K562 (cell line): ENCODE measurements at regions of chr7 and their contacts with region 1.

Region 1: DNA sequence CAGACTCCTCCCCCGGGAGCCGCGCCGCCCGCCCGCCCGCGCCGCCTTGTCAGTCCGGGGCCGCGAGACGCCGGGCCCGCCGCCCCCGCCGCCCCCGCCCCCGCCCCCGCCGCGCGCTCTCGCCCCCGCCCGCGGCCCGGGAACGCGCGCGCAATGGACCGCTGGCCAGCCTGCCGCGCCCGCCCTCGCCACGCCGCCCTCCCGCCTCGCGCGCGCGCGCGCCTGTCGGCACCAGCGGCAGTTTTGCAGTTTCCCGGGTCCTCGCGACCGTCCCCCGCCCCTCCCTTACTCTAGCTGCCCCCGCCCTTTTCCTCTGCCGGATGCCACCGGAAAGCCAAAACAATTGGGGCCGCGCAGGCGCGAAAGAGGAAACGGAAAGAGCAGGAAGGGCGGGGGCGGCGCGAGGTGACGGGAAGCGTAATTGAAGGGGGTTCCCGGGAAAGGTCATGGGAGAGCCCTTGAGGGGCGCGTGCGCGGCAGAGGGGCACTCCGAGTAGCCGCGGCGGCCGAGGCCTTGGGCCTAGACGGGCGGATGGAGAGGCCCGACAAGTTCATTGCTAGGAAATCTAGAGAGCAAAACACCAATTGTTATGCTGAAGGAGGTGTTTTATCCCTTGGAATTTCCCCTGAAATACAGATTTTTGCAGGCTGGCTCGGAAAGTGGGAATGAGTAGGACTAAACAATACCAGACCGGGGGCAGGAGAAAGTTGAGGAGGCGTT is 400 bp upstream of the KBTBD2 start:
- DNase-seq: peak; percentile 88 to 98 (median 90)
- ATAC-seq: peak; percentile 50
- H3K4me3 ChIP-seq: peak overlapping the region; percentile 84
- H3K27ac ChIP-seq: peak overlapping the region; percentile 99
- H3K4me1 ChIP-seq: peaks cover 21 to 35% of the 10 kb centered on the region in 2 experiments
- H3K27me3 ChIP-seq: no peaks in the 10 kb centered on the region
- CTCF ChIP-seq: no peak
- EP300 ChIP-seq: peak; percentile 4; the same call in 1 of the 2 replicates
- POLR2A ChIP-seq: peak; percentile 83
- RAD21 ChIP-seq: no peak

Region 2: DNA sequence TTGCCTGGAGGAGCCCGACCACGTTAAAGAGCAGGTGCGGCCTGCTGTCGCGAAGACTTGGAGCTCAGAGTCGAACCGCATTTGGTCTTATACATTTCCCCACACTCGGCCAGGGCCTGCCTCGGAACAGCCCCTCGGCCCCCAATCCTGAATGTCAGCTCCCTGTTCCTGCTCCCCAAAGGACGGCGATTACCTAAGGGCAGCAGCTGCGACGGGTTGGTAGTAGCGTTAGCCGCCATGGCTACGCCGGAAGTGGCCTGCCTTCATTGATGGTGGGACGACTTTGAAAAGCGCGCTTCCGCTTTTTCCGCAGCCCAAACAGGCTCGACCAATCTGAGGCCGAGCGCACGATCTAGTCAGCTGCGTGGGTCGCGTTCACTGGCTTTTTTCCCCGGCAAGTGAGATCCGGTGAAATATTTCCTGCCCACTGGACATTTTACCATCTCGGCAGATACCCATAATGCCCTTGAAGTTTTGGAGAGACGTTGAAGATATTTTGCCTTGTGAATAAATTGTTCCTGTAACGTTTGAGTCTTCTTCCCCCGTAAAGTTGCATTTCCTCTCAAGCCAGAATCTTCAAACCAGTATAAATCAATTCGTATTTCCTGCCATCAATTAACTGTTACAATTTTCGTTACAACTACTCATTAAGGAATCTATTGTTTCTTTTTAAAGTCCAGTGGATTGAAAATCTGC is 401.7 kb before region 1 on chr7 and contains the start of gene LSM5:
- CTCF ChIA-PET with region 1: no interaction called
- POLR2A ChIA-PET with region 1: no interaction called
- in situ Hi-C with region 1: no loop called
- intact Hi-C with region 1: loop called (anchors 5 kb)
- DNase-seq: peak; percentile 71 to 97 (median 77)
- ATAC-seq: peak; percentile 87
- H3K4me3 ChIP-seq: peak within 1 kb of the TSS; percentile 62
- H3K27ac ChIP-seq: peak within 1 kb of the TSS; percentile 81
- H3K4me1 ChIP-seq: peaks cover 0 to 3% of the 10 kb centered on the region in 2 experiments; a peak in 2 of 5 replicates
- H3K27me3 ChIP-seq: no peaks in the 10 kb centered on the region
- CTCF ChIP-seq: no peak
- EP300 ChIP-seq: peak; percentile 46; the same call in 1 of the 2 replicates
- POLR2A ChIP-seq: peak; percentile 91
- RAD21 ChIP-seq: no peak; a peak in 1 of 4 replicates
- polyA plus RNA-seq, gene LSM5: 513 to 620 TPM

Region 3: GRCh38 chr7:32879460-32879859 is 12.5 kb before region 1 on chr7:
- CTCF ChIA-PET with region 1: no interaction called
- POLR2A ChIA-PET with region 1: interaction called, 32 read pairs
- in situ Hi-C with region 1: no loop called
- intact Hi-C with region 1: no loop called
- DNase-seq: peak; percentile 23 to 68 (median 43)
- ATAC-seq: peak; percentile 80
- H3K4me3 ChIP-seq: no peak overlapping the region
- H3K27ac ChIP-seq: peak overlapping the region; percentile 63
- H3K4me1 ChIP-seq: peaks cover 16 to 34% of the 10 kb centered on the region in 2 experiments
- H3K27me3 ChIP-seq: no peaks in the 10 kb centered on the region
- CTCF ChIP-seq: no peak
- EP300 ChIP-seq: peak; percentile 64
- POLR2A ChIP-seq: no peak
- RAD21 ChIP-seq: no peak

Region 4: DNA sequence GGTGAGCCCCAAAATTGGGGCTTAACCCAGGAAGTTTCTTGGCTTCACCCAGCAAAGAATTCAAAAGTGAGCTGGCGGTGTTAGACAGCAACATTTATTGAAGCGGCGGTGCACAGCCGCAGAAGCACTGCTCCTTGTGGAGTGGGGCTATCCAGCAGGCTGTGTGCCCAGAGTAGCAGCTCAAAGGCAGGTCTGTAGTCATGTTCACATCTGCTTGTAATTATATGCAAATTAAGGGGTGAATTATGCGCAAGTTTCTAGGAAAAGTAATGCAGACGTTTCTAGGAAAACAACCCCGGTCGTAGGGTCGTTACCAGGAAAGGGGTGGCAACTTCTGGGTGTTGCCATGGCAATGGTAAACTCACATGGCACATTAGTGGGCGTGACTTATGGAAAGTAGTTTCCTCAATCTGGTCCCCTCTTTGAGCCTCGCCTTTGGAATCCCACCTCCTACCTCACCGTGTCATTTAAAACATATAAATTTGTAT is 13.3 kb after region 1 on chr7:
- CTCF ChIA-PET with region 1: no interaction called
- POLR2A ChIA-PET with region 1: interaction called, 111 read pairs
- in situ Hi-C with region 1: no loop called
- intact Hi-C with region 1: loop called (anchors 1 kb)
- DNase-seq: peak; percentile 81 to 98 (median 88)
- ATAC-seq: peak; percentile 95
- H3K4me3 ChIP-seq: peak overlapping the region; percentile 31
- H3K27ac ChIP-seq: peak overlapping the region; percentile 81
- H3K4me1 ChIP-seq: peaks cover 11 to 26% of the 10 kb centered on the region in 2 experiments
- H3K27me3 ChIP-seq: no peaks in the 10 kb centered on the region
- CTCF ChIP-seq: peak; percentile 20 to 32 (median 32); a peak in 3 of 6 replicates
- EP300 ChIP-seq: peak; percentile 61; the same call in 1 of the 2 replicates
- POLR2A ChIP-seq: peak; percentile 76
- RAD21 ChIP-seq: peak; percentile 10 to 34; a peak in 2 of 4 replicates

Region 5: DNA sequence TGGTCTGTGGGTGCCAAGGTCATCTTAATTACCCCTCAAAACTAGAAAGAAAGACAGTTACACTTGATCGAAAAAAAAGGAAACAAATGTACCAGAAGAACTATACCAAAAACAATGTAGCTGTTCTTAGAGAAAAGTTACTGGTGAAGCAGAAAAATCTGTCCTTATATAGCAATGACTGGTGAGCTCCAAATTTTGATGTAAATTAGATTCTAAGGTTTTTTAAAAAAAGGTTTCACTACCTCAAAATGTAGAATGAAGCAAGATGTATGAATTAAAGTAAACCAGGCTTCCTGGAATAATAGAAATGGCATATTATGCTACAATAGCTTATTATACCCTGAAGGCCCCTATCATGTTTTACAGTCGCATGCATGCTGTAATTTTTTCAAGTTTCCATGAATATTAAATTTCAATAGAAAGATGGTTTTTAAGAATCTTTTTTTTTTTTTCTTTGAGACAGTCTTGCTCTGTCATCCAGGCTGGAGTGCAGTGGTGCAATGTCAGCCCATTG is 36.9 kb after region 1 on chr7:
- CTCF ChIA-PET with region 1: no interaction called
- POLR2A ChIA-PET with region 1: no interaction called
- in situ Hi-C with region 1: no loop called
- intact Hi-C with region 1: no loop called
- DNase-seq: no peak
- ATAC-seq: no peak
- H3K4me3 ChIP-seq: no peak overlapping the region
- H3K27ac ChIP-seq: no peak overlapping the region
- H3K4me1 ChIP-seq: no peaks in the 10 kb centered on the region
- H3K27me3 ChIP-seq: no peaks in the 10 kb centered on the region
- CTCF ChIP-seq: no peak
- EP300 ChIP-seq: no peak
- POLR2A ChIP-seq: no peak
- RAD21 ChIP-seq: no peak

Region 6: GRCh38 chr7:33040803-33041516 is 149.0 kb after region 1 on chr7:
- CTCF ChIA-PET with region 1: no interaction called
- POLR2A ChIA-PET with region 1: no interaction called
- in situ Hi-C with region 1: no loop called
- intact Hi-C with region 1: loop called (anchors 5 kb)
- DNase-seq: peak in 2 of 4 experiments; percentile 35 to 68
- ATAC-seq: peak; percentile 85
- H3K4me3 ChIP-seq: no peak overlapping the region
- H3K27ac ChIP-seq: peak overlapping the region; percentile 7; the same call in 1 of the 3 replicates
- H3K4me1 ChIP-seq: peaks cover 8 to 20% of the 10 kb centered on the region in 2 experiments; a peak in 3 of 5 replicates
- H3K27me3 ChIP-seq: no peaks in the 10 kb centered on the region
- CTCF ChIP-seq: no peak
- EP300 ChIP-seq: no peak
- POLR2A ChIP-seq: no peak
- RAD21 ChIP-seq: no peak